GM18951 (cell line): ENCODE measurements at regions of chr5 and their contacts with region 1.

Region 1: DNA sequence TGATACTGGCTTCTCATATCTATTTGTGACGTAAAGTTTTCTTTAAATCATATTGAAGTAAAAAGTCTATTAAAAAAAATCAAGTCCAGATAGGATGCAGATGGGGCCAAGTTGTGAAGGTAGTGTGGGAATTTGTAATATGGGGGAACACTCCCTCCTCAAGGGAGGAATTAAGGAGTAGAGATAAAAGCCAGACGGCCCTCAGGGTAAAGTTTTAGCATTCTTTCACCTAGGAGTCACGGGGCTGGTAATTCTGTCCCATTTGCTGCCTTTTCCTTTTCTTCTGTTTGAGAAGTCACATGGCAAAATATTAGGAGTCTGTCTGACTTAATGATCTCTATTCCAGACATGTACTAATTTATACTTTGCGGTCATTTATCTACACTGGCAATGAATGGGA is 61.8 kb downstream of the SNX24 start:
- POLR2A ChIP-seq: no peak

Region 2: DNA sequence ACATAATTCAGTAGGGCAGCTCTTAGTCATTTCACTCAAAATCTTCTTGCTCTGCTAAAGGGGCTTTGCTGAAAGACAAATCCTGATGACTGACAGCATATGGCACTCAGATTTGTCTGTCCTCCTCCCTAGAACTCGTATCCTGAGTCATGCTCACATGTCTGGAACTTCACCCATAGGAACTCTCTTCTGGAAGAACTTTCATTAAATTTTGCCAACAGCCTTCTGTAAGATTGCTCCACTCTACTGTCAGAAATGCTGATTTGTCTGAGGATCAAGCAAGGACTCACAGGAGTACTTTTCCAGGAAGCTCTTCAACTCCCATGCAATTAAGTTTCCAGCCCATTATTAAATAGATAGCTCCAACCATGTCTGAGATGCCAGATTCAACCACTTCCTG is 192.1 kb before region 1 on chr5:
- in situ Hi-C with region 1: no loop called
- POLR2A ChIP-seq: no peak

Region 3: DNA sequence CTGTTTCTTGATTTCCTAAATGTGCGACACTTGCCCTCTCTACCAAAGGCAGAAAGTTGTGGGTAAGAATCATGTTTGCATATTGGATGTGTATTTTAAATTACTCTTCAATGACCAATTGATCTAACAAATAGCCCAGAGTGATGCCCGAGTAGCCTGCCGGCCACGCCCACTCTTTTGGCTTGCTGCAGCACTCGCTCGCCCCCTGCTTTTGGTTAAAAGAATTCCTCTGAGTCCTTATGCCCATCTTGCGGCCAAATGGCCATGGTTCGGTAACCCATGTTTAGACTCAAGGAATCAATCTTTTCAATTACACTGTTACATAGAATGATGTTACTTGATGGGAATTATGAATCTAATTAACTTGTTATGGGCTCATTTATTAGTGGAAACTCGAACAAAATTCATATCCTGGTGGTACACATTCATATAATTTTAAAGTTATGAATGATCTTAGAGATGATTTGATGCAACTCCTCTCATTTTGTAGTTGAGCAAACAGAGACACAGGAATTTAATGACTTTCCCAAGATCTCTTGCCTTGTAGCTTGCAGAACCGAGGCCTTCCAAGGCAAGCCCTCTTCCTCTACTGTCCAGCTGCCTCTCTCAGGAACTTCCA is 92.8 kb after region 1 on chr5:
- in situ Hi-C with region 1: loop called (anchors 10 kb)
- POLR2A ChIP-seq: no peak